Calu3 (cell line): ENCODE measurements at regions of chr3 and their contacts with region 1.

Region 1: DNA sequence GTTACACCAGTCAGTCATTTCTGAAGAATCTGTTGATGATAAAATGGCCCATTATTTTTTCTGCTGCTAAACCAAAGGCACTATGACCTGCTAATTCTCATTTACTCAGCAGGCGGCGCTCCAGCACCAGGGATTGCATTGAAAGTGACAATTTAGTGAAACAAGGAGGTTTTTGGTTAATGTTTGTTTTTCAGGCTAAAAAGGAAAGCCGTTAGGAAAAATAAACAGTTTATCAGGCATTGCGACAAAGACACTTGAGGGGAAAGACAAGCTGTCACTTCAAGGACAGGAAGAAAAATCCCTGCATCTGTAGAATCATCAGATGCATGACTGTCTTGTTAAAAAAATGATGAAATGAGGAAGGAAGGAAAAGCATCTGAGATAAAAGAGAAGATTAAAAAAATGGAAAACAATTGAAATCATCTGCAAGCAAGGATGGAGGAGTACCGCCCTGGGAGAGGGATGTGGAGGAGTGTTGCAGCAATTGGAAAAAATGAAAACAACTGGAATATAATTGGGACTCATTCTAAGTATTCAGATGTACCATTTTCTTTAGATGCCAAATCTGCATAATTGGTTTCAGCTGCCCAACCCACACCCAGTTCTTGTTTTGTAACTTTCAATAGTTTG is 54.0 kb downstream of the NR1D2 start:
- DNase-seq: peak; percentile 72
- H3K4me3 Mint-ChIP-seq: no peak overlapping the region
- H3K27ac Mint-ChIP-seq: peak overlapping the region; percentile 2
- H3K4me1 Mint-ChIP-seq: peaks cover 9% of the 10 kb centered on the region
- H3K27me3 Mint-ChIP-seq: no peaks in the 10 kb centered on the region
- CTCF ChIP-seq: peak; percentile 84

Region 2: DNA sequence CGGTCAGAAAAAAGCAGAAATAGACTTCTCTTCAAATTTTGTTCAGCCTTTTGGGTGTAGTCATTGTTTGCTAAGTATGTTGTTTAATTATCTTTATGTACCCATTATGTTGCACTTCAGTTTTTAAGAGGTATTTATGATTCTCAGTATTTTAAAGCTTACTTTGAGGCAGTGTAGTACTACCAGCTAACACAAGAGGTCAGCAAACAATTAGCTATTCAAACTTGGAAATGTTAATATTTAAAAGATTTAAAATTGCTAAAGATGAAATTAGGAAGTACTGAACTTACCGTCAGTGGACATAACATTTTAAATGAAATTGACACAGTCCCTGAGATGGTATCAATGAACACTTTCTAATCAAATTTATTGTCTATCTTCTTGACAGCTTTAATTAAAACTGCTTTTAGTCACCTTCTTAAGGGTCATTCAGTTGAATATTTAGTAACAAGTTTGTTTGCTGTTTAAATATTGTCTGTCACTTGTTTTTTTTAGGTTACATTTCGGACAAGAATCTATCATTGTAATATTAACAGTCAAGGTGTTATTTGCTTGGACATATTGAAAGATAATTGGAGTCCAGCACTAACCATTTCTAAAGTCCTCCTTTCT is 110.4 kb before region 1 on chr3:
- CTCF ChIA-PET with region 1: no interaction called
- intact Hi-C with region 1: loop called (anchors 5 kb)
- DNase-seq: peak; percentile 25
- H3K4me3 Mint-ChIP-seq: no peak overlapping the region
- H3K27ac Mint-ChIP-seq: no peak overlapping the region
- H3K4me1 Mint-ChIP-seq: no peaks in the 10 kb centered on the region
- H3K27me3 Mint-ChIP-seq: no peaks in the 10 kb centered on the region
- CTCF ChIP-seq: peak; percentile 49

Region 3: DNA sequence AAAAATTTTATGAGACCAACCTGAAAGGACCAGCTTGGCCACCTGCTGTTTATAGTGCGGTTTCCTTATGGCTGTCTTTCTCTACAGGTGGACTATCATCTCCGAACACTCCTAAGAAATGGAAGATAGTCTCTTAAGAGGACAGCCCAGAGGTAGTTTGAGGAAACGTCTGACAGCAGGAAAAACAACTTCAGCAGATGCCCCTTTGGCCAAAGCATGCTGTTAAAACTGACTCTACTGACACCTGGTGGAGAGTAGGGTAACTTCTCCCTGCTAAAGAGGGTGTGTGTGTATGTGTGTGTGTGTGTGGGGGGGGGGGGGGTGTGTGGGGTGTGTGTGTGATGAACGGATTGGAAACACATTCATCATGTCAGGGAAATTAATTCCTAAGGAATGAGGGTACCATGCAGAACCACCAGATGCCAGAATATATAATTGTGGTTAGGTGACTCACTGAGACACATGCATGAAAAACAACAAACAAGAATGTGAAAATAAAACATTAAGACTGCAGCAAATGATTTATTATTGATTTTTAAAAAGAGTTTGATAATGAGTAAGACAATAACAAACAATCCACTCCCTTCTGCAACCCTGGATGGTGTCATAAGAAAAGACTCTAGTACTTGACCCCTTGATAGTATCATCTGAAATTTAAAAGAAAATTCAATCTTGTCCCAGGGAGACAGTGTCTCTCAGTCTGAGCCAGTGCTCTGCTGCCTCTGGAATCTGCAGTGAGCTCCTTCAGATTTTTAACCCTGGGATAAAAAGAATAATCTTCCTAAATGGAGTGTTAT is 239.0 kb after region 1 on chr3:
- CTCF ChIA-PET with region 1: interaction called, 6 read pairs
- intact Hi-C with region 1: loop called (anchors 1 kb)
- DNase-seq: peak; percentile 70
- H3K4me3 Mint-ChIP-seq: no peak overlapping the region
- H3K27ac Mint-ChIP-seq: peak overlapping the region; percentile 0
- H3K4me1 Mint-ChIP-seq: peaks cover 35% of the 10 kb centered on the region
- H3K27me3 Mint-ChIP-seq: no peaks in the 10 kb centered on the region
- CTCF ChIP-seq: peak; percentile 58

Region 4: DNA sequence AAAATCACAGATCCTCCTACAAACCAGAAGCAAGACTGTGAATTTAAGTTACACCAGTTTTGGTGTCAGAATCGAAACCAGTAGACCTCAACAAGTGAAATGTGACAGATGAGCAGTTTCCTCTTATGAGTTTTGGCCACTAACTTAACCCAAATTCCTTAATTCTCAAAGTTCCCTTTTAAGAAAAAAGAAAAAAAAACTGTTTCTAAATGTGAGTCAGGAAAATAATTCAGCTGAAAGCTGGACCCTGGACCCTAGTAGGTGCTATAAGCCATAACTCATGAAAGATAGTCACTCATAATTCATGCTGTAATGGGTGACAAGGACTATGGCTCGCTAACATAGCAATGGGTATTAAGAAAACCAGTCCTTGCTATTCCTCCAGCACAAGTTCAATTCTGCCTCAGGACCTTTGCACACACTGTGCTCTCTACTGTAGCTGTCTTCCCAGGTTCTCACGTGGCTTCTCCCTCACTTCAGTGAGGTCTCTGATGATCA is 504.5 kb after region 1 on chr3:
- CTCF ChIA-PET with region 1: no interaction called
- intact Hi-C with region 1: loop called (anchors 10 kb)
- DNase-seq: no peak
- H3K4me3 Mint-ChIP-seq: no peak overlapping the region
- H3K27ac Mint-ChIP-seq: no peak overlapping the region
- H3K4me1 Mint-ChIP-seq: peaks cover 24% of the 10 kb centered on the region
- H3K27me3 Mint-ChIP-seq: no peaks in the 10 kb centered on the region
- CTCF ChIP-seq: no peak

Region 5: GRCh38 chr3:24640330-24640877 is 641.3 kb after region 1 on chr3:
- CTCF ChIA-PET with region 1: no interaction called
- intact Hi-C with region 1: loop called (anchors 1 kb)
- DNase-seq: peak; percentile 32
- H3K4me3 Mint-ChIP-seq: no peak overlapping the region
- H3K27ac Mint-ChIP-seq: no peak overlapping the region
- H3K4me1 Mint-ChIP-seq: peaks cover 20% of the 10 kb centered on the region
- H3K27me3 Mint-ChIP-seq: no peaks in the 10 kb centered on the region
- CTCF ChIP-seq: peak; percentile 59

Region 6: GRCh38 chr3:24680214-24680967 is 681.3 kb after region 1 on chr3:
- CTCF ChIA-PET with region 1: no interaction called
- intact Hi-C with region 1: loop called (anchors 1 kb)
- DNase-seq: peak; percentile 84
- H3K4me3 Mint-ChIP-seq: no peak overlapping the region
- H3K27ac Mint-ChIP-seq: no peak overlapping the region
- H3K4me1 Mint-ChIP-seq: peaks cover 20% of the 10 kb centered on the region
- H3K27me3 Mint-ChIP-seq: no peaks in the 10 kb centered on the region
- CTCF ChIP-seq: peak; percentile 83